GM10248 (cell line): ENCODE measurements at regions of chr12 and their contacts with region 1.

Region 1: GRCh38 chr12:10140001-10140400 is 10.0 kb upstream of the CLEC7A start:
- DNase-seq: peak; percentile 35
- CTCF ChIP-seq: peak; percentile 38

Region 2: GRCh38 chr12:10012630-10013330 is 127.2 kb before region 1 on chr12:
- CTCF ChIA-PET with region 1: interaction called, 13 read pairs
- POLR2A ChIA-PET with region 1: no interaction called
- DNase-seq: no peak
- CTCF ChIP-seq: no peak

Region 3: GRCh38 chr12:10033783-10034545 is 106.0 kb before region 1 on chr12:
- CTCF ChIA-PET with region 1: interaction called, 29 read pairs
- POLR2A ChIA-PET with region 1: no interaction called
- DNase-seq: no peak
- CTCF ChIP-seq: no peak

Region 4: GRCh38 chr12:10113080-10113479 is 26.9 kb before region 1 on chr12:
- CTCF ChIA-PET with region 1: no interaction called
- POLR2A ChIA-PET with region 1: no interaction called
- DNase-seq: no peak
- CTCF ChIP-seq: no peak

Region 5: GRCh38 chr12:10167588-10167987 is 27.6 kb after region 1 on chr12:
- CTCF ChIA-PET with region 1: no interaction called
- POLR2A ChIA-PET with region 1: no interaction called
- DNase-seq: no peak
- CTCF ChIP-seq: no peak